Activated naive CD4-positive, alpha-beta T cell treated with anti-CD3 and anti-CD28 coated beads for 36 hours (primary cell): ENCODE measurements at regions of chr10 and their contacts with region 1.

Region 1: GRCh38 chr10:73879296-73880173 is 5.2 kb upstream of the CAMK2G start:
- DNase-seq: peak; percentile 97
- H3K4me3 Mint-ChIP-seq: no peak overlapping the region
- H3K27ac Mint-ChIP-seq: peak overlapping the region; percentile 50
- H3K4me1 Mint-ChIP-seq: peaks cover 43% of the 10 kb centered on the region
- H3K27me3 Mint-ChIP-seq: no peaks in the 10 kb centered on the region

Region 2: DNA sequence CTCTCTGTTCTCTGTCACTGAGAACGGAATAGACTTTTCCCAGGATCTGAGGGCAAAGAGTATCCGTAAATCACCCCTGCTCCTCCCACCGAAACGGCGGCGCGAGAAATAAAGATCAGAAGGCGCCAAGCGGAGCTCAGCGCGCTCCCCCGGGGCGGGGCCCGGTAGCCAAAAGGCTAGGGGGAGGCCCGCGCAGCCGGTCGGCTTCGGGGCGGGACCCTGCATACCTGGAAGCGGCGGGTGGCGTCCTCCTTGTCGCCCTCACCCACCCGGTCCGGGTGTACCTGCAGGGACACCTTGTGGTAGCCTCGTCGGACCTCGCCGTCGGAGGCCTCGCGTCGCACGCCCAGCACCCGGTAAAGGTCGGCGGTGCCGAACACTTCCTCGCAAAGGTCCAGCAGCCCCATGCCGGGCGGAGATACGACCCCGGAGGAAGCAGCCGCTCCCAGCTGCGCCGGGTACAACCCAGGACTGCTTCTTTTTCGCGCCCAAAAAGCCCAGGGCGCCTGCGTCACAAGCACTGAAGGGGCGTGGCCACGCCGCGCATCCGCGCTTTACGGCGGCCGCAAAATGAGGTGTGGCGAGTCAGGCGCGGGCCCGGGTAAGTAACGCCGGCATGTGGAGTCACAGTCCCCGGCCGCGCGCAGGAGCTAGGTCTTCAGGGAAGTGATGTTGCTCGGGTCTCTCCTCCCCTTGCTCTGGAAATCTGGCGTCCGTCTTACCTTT is 632.6 kb before region 1 on chr10 and contains the start of gene DNAJC9:
- CTCF ChIA-PET with region 1: interaction called, 3 read pairs
- intact Hi-C with region 1: loop called (anchors 5 kb)
- DNase-seq: peak; percentile 98
- H3K4me3 Mint-ChIP-seq: peak within 1 kb of the TSS; percentile 100
- H3K27ac Mint-ChIP-seq: peak within 1 kb of the TSS; percentile 97
- H3K4me1 Mint-ChIP-seq: peaks cover 67% of the 10 kb centered on the region
- H3K27me3 Mint-ChIP-seq: no peaks in the 10 kb centered on the region
- total RNA-seq, gene DNAJC9: 55.2 to 57.2 TPM

Region 3: GRCh38 chr10:73653701-73654335 is 225.7 kb before region 1 on chr10:
- CTCF ChIA-PET with region 1: no interaction called
- intact Hi-C with region 1: loop called (anchors 1 kb)
- DNase-seq: no peak
- H3K4me3 Mint-ChIP-seq: no peak overlapping the region
- H3K27ac Mint-ChIP-seq: no peak overlapping the region
- H3K4me1 Mint-ChIP-seq: peaks cover 2% of the 10 kb centered on the region
- H3K27me3 Mint-ChIP-seq: peaks cover 4% of the 10 kb centered on the region

Region 4: DNA sequence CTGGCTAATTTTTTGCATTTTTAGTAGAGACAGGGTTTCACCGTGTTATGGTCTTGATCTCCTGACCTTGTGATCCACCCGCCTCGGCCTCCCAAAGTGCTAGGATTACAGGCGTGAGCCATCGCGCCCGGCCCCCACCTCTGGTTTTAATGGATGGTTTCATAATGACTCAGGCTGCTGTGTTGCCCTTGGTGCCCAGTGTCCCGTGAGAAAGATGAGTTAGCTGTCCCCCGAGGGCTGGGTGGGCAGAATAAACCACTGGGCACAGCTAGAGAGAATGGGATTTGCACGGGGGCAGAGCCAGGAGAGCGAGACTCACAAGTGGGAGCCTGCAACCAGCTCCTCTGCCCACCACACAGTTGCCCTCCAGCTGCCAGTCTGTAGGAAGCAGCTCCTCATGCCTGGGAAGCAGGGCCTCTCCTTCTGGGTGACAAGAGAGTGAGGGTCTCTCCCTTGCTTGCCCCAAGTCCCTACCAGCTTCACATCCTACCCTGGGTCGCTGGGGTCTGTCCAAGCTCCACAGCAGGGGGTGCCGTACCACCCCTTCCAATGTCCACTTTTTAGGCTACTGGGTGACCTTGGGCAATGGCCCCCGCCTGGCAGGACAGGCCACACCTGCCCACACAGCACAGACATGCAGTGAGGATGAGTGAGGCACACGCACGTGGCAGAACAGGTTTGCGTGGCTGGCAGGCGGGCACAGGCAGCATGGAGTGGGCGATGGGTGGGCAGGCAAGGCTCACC is 52.0 kb before region 1 on chr10:
- CTCF ChIA-PET with region 1: interaction called, 10 read pairs
- intact Hi-C with region 1: no loop called
- DNase-seq: no peak
- H3K4me3 Mint-ChIP-seq: no peak overlapping the region
- H3K27ac Mint-ChIP-seq: no peak overlapping the region
- H3K4me1 Mint-ChIP-seq: no peaks in the 10 kb centered on the region
- H3K27me3 Mint-ChIP-seq: no peaks in the 10 kb centered on the region

Region 5: GRCh38 chr10:73892310-73893030 is 12.9 kb after region 1 on chr10:
- CTCF ChIA-PET with region 1: interaction called, 21 read pairs
- intact Hi-C with region 1: no loop called
- DNase-seq: no peak
- H3K4me3 Mint-ChIP-seq: no peak overlapping the region
- H3K27ac Mint-ChIP-seq: no peak overlapping the region
- H3K4me1 Mint-ChIP-seq: peaks cover 9% of the 10 kb centered on the region
- H3K27me3 Mint-ChIP-seq: no peaks in the 10 kb centered on the region

Region 6: DNA sequence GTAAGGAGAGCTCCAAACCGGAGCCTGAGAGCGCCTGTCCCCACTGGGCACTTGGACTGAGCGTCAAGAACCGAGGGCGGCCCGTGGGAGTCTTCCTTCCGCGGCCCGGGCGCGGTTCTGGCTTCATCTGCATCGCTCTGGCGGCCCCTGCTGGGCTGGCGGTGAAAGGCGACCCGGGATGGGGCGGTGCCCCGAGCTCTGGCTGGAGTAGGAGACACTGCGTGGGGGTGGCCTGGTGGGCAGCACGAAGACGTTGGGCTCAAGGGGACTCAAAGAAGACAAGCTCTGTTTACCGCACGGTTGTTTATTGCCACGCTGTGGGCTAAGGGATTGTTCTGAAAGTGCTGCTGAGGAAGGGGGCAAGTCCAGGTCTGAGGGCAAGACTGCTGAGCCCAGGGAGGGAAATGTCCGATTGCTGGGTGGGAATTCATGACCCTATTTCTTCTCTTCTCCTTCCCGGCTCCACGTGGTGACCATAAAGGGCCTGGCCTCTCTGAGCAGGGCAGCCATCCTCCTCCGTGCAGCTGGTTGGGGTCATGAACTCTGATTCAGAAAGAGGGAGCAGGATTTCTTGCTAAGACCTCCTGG is 61.2 kb after region 1 on chr10:
- CTCF ChIA-PET with region 1: interaction called, 396 read pairs
- intact Hi-C with region 1: no loop called
- DNase-seq: peak; percentile 87
- H3K4me3 Mint-ChIP-seq: no peak overlapping the region
- H3K27ac Mint-ChIP-seq: no peak overlapping the region
- H3K4me1 Mint-ChIP-seq: peaks cover 5% of the 10 kb centered on the region
- H3K27me3 Mint-ChIP-seq: no peaks in the 10 kb centered on the region

Region 7: DNA sequence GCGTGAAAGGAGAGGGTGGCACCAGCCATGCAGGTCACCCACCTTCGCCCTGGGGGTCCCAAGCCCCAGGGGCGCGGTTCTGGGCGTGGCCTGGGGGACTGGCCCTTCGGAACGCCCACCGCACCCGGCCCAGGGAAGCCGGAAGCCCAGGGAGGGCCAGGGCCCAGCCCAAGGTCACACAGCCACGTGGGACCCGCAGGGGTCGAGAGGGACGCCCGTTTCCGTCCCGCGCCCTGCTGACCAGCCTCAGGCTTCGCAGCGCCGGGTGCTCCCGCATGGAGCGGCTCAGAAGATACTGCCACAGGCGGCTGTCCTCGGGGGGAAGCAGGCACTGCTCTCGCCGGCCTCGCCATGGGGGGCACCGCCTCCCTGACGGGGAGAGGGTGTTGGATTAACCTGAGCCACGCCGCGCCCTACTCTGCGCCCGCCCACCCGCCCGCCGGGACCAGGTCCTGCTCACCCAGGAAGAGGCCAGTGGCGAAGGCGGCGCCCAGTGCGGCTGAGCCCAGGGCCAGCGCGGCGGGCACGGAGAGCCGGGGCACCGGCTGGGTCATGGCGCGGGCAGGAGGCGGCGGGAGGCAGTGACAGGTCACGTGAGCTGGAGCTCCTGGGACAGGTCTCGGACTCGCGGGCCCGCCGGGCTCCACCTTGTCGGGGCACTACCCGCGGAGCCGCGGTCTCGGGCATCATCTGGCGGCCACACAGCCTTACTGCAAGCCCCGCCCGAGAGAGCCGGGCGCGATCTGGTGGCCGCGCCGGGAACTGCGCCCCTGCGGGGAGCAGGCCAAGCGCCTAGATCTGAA is 1356.0 kb after region 1 on chr10 and contains the start of gene COMTD1:
- CTCF ChIA-PET with region 1: no interaction called
- intact Hi-C with region 1: loop called (anchors 10 kb)
- DNase-seq: peak; percentile 96
- H3K4me3 Mint-ChIP-seq: peak within 1 kb of the TSS; percentile 80
- H3K27ac Mint-ChIP-seq: peak within 1 kb of the TSS; percentile 84
- H3K4me1 Mint-ChIP-seq: peaks cover 18% of the 10 kb centered on the region
- H3K27me3 Mint-ChIP-seq: no peaks in the 10 kb centered on the region
- total RNA-seq, gene COMTD1: 33.2 to 34.8 TPM